Gastrocnemius medialis (tissue), 4 donors: ENCODE measurements at regions of chr9 and their contacts with region 1.

Region 1: GRCh38 chr9:93637886-93638285 is 61.5 kb downstream of the PHF2 start:
- DNase-seq: no peak
- ATAC-seq: no peak
- H3K4me3 ChIP-seq: no peak overlapping the region
- H3K27ac ChIP-seq: no peak overlapping the region
- H3K4me1 ChIP-seq: peaks cover 0 to 3% of the 10 kb centered on the region in 2 donors
- H3K27me3 ChIP-seq: no peaks in the 10 kb centered on the region
- CTCF ChIP-seq: no peak
- POLR2A ChIP-seq: no peak

Region 2: GRCh38 chr9:93595861-93596365 is 42.0 kb before region 1 on chr9:
- in situ Hi-C with region 1: no loop called
- intact Hi-C with region 1: loop called (anchors 1 kb)
- DNase-seq: no peak
- ATAC-seq: no peak
- H3K4me3 ChIP-seq: no peak overlapping the region
- H3K27ac ChIP-seq: no peak overlapping the region
- H3K4me1 ChIP-seq: peaks cover 30 to 57% of the 10 kb centered on the region in 2 donors
- H3K27me3 ChIP-seq: no peaks in the 10 kb centered on the region
- CTCF ChIP-seq: no peak
- POLR2A ChIP-seq: no peak

Region 3: DNA sequence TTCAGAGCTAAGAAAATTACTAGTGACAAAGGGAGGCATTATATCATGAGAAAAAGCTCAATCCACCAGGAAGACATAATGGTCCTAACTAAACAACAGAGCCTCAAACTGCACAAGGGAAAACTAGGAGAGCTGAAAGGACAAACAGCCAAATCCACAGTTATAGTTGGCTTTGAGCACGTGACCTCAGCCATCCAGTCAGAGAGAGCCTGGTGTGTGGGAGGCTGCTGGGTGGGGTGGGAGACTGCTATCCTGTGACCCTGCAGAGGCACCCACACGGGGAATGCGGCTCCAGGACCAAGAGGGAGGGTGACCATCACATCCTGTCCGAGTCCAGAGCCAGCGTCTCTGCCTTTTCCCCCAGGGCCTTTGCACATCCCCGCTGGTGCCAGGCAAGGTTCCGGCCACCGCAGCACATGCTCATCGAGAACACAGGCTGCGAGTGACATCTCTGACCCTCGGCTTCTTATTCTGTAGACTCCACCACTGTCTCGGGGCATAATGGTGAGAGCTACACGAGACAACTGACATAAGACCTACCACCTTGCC is 83.6 kb after region 1 on chr9:
- in situ Hi-C with region 1: no loop called
- intact Hi-C with region 1: no loop called
- DNase-seq: no peak
- ATAC-seq: no peak
- H3K4me3 ChIP-seq: no peak overlapping the region
- H3K27ac ChIP-seq: no peak overlapping the region
- H3K4me1 ChIP-seq: no peaks in the 10 kb centered on the region
- H3K27me3 ChIP-seq: no peaks in the 10 kb centered on the region
- CTCF ChIP-seq: no peak
- POLR2A ChIP-seq: no peak